IMR-90 (cell line): ENCODE measurements at regions of chr9 and their contacts with region 1.

Region 1: GRCh38 chr9:69121828-69122548 is 52.1 kb upstream of the TJP2 start:
- DNase-seq: peak; percentile 61
- ATAC-seq: peak; percentile 78
- H3K4me3 ChIP-seq: peak overlapping the region; percentile 78
- H3K27ac ChIP-seq: peak overlapping the region; percentile 24
- H3K4me1 ChIP-seq: 0 out of 2 replicates have a peak, but pooled peaks cover 3% of the 10 kb centered on the region
- H3K27me3 ChIP-seq: no peaks in the 10 kb centered on the region
- CTCF ChIP-seq: no peak
- POLR2A ChIP-seq: no peak
- RAD21 ChIP-seq: 0 out of 2 replicates have a peak, but pooled peaks have one; percentile 3

Region 2: DNA sequence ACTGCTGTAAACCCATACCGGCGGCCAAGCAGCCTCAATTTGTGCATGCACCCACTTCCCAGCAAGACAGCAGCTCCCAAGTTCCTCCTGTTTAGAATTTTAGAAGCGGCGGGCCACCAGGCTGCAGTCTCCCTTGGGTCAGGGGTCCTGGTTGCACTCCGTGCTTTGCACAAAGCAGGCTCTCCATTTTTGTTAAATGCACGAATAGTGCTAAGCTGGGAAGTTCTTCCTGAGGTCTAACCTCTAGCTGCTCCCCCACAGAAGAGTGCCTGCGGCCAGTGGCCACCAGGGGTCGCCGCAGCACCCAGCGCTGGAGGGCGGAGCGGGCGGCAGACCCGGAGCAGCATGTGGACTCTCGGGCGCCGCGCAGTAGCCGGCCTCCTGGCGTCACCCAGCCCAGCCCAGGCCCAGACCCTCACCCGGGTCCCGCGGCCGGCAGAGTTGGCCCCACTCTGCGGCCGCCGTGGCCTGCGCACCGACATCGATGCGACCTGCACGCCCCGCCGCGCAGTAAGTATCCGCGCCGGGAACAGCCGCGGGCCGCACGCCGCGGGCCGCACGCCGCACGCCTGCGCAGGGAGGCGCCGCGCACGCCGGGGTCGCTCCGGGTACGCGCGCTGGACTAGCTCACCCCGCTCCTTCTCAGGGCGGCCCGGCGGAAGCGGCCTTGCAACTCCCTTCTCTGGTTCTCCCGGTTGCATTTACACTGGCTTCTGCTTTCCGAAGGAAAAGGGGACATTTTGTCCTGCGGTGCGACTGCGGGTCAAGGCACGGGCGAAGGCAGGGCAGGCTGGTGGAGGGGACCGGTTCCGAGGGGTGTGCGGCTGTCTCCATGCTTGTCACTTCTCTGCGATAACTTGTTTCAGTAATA is 86.3 kb before region 1 on chr9 and contains the start of gene FXN:
- CTCF ChIA-PET with region 1: no interaction called
- POLR2A ChIA-PET with region 1: no interaction called
- dilution Hi-C with region 1: no loop called
- in situ Hi-C with region 1: no loop called
- intact Hi-C with region 1: loop called (anchors 5 kb)
- DNase-seq: peak; percentile 75
- ATAC-seq: peak; percentile 97
- H3K4me3 ChIP-seq: peak within 1 kb of the TSS; percentile 87
- H3K27ac ChIP-seq: peak within 1 kb of the TSS; percentile 91
- H3K4me1 ChIP-seq: peaks cover 2% of the 10 kb centered on the region; the same call in 1 of the 2 replicates
- H3K27me3 ChIP-seq: no peaks in the 10 kb centered on the region
- CTCF ChIP-seq: peak; percentile 98
- POLR2A ChIP-seq: peak; percentile 62; the same call in 1 of the 2 replicates
- RAD21 ChIP-seq: peak; percentile 69
- total RNA-seq, gene FXN: 3.9 and 6.1 TPM in 2 replicates

Region 3: DNA sequence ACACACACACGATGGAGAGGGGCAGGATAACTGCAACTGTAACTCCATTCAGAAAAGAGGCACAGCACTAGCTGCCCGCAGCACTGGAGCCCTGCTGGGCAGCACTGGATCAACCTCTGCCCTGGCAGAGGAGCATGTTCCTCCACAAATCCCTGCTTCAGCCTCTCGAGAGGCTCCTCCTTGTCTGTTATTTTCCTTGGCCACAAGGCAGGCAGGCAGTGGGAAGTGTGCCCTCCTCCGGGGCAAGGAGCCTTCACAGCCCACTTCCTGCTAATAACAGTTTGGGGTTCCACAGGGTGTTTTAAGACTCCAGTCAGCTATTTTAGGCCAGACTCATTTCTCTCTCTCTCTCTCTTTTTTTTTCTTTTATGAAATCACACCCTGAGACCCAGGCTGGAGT is 74.6 kb before region 1 on chr9:
- CTCF ChIA-PET with region 1: no interaction called
- POLR2A ChIA-PET with region 1: no interaction called
- dilution Hi-C with region 1: no loop called
- in situ Hi-C with region 1: no loop called
- intact Hi-C with region 1: no loop called
- DNase-seq: no peak
- ATAC-seq: no peak
- H3K4me3 ChIP-seq: no peak overlapping the region
- H3K27ac ChIP-seq: no peak overlapping the region
- H3K4me1 ChIP-seq: peaks cover 8% of the 10 kb centered on the region
- H3K27me3 ChIP-seq: no peaks in the 10 kb centered on the region
- CTCF ChIP-seq: no peak
- POLR2A ChIP-seq: no peak
- RAD21 ChIP-seq: no peak

Region 4: GRCh38 chr9:69149321-69149807 is 27.4 kb after region 1 on chr9:
- CTCF ChIA-PET with region 1: no interaction called
- POLR2A ChIA-PET with region 1: interaction called, 8 read pairs
- dilution Hi-C with region 1: no loop called
- in situ Hi-C with region 1: no loop called
- intact Hi-C with region 1: loop called (anchors 1 kb)
- DNase-seq: peak; percentile 87
- ATAC-seq: peak; percentile 95
- H3K4me3 ChIP-seq: peak overlapping the region; percentile 1; the same call in 1 of the 2 replicates
- H3K27ac ChIP-seq: no peak overlapping the region; the same call in 1 of the 2 replicates
- H3K4me1 ChIP-seq: no peaks in the 10 kb centered on the region
- H3K27me3 ChIP-seq: no peaks in the 10 kb centered on the region
- CTCF ChIP-seq: peak; percentile 60
- POLR2A ChIP-seq: no peak
- RAD21 ChIP-seq: peak; percentile 72

Region 5: GRCh38 chr9:69174616-69175463 is 52.9 kb after region 1 on chr9:
- CTCF ChIA-PET with region 1: no interaction called
- POLR2A ChIA-PET with region 1: no interaction called
- dilution Hi-C with region 1: no loop called
- in situ Hi-C with region 1: no loop called
- intact Hi-C with region 1: loop called (anchors 5 kb)
- DNase-seq: peak; percentile 98
- ATAC-seq: peak; percentile 60
- H3K4me3 ChIP-seq: peak overlapping the region; percentile 69
- H3K27ac ChIP-seq: peak overlapping the region; percentile 23
- H3K4me1 ChIP-seq: peaks cover 6% of the 10 kb centered on the region
- H3K27me3 ChIP-seq: no peaks in the 10 kb centered on the region
- CTCF ChIP-seq: no peak
- POLR2A ChIP-seq: peak; percentile 80
- RAD21 ChIP-seq: no peak; the same call in 1 of the 2 replicates

Region 6: GRCh38 chr9:69190086-69190862 is 68.3 kb after region 1 on chr9:
- CTCF ChIA-PET with region 1: interaction called, 6 read pairs
- POLR2A ChIA-PET with region 1: no interaction called
- dilution Hi-C with region 1: no loop called
- in situ Hi-C with region 1: no loop called
- intact Hi-C with region 1: loop called (anchors 2 kb)
- DNase-seq: no peak
- ATAC-seq: no peak
- H3K4me3 ChIP-seq: no peak overlapping the region
- H3K27ac ChIP-seq: no peak overlapping the region
- H3K4me1 ChIP-seq: peaks cover 14% of the 10 kb centered on the region
- H3K27me3 ChIP-seq: no peaks in the 10 kb centered on the region
- CTCF ChIP-seq: no peak
- POLR2A ChIP-seq: no peak
- RAD21 ChIP-seq: no peak